ENCODE measurements at regions of chr18 and their contacts with region 1.

Region 1: GRCh38 chr18:38790303-38790702 is 1224.7 kb upstream of the CELF4 start:
- DNase-seq: peak; percentile 48
- H3K4me3 Mint-ChIP-seq: no peak overlapping the region
- H3K27ac Mint-ChIP-seq: no peak overlapping the region
- H3K4me1 Mint-ChIP-seq: no peaks in the 10 kb centered on the region
- H3K27me3 Mint-ChIP-seq: no peaks in the 10 kb centered on the region
- CTCF ChIP-seq: peak; percentile 46

Region 2: DNA sequence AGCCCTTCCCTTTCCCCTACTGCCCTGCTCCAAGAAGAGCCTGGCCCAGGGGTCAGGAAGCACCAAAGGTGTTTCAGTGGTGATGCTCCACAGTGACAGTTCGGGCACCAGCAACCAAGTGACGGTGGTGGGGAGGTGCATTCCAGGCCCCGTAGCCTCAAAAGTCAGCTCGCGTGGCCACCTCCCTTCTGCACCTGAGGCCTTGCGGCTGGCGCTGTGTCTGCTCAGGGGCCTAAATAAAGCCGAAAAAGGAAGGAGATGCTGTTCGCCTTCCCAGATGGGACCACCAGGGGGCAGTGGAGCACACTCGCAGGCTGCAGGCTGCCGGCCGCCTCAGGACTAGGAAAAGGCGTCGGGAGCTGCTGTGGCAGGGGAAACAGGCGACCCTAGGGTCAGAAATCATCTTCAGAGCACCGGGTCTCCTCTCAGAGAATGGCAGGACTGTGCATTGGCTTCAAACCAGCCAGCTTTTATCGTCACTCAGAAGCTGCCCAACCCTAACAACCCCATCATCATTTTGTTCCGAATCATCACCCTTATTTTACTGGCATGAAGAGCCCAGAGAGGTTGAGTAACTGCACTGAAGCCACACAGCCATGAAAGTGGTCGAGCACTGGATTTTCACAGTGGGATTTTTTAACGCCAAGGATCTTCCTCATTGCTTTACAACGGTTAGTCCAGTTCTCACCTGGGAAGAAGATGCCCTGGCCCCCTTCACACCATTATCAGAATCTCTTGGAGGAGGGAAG is 1011.7 kb before region 1 on chr18:
- CTCF ChIA-PET with region 1: no interaction called
- POLR2A ChIA-PET with region 1: no interaction called
- intact Hi-C with region 1: loop called (anchors 2 kb)
- DNase-seq: peak; percentile 59
- H3K4me3 Mint-ChIP-seq: no peak overlapping the region
- H3K27ac Mint-ChIP-seq: no peak overlapping the region
- H3K4me1 Mint-ChIP-seq: no peaks in the 10 kb centered on the region
- H3K27me3 Mint-ChIP-seq: peaks cover 21% of the 10 kb centered on the region
- CTCF ChIP-seq: peak; percentile 81

Region 3: GRCh38 chr18:38427232-38427631 is 363.1 kb before region 1 on chr18:
- CTCF ChIA-PET with region 1: no interaction called
- POLR2A ChIA-PET with region 1: no interaction called
- intact Hi-C with region 1: loop called (anchors 10 kb)
- DNase-seq: peak; percentile 18
- H3K4me3 Mint-ChIP-seq: no peak overlapping the region
- H3K27ac Mint-ChIP-seq: no peak overlapping the region
- H3K4me1 Mint-ChIP-seq: no peaks in the 10 kb centered on the region
- H3K27me3 Mint-ChIP-seq: no peaks in the 10 kb centered on the region
- CTCF ChIP-seq: no peak

Region 4: GRCh38 chr18:38459131-38459994 is 330.9 kb before region 1 on chr18:
- CTCF ChIA-PET with region 1: no interaction called
- POLR2A ChIA-PET with region 1: no interaction called
- intact Hi-C with region 1: no loop called
- DNase-seq: no peak
- H3K4me3 Mint-ChIP-seq: no peak overlapping the region
- H3K27ac Mint-ChIP-seq: no peak overlapping the region
- H3K4me1 Mint-ChIP-seq: no peaks in the 10 kb centered on the region
- H3K27me3 Mint-ChIP-seq: no peaks in the 10 kb centered on the region
- CTCF ChIP-seq: no peak

Region 5: GRCh38 chr18:38545071-38545470 is 245.2 kb before region 1 on chr18:
- CTCF ChIA-PET with region 1: no interaction called
- POLR2A ChIA-PET with region 1: no interaction called
- intact Hi-C with region 1: loop called (anchors 1 kb)
- DNase-seq: peak; percentile 81
- H3K4me3 Mint-ChIP-seq: no peak overlapping the region
- H3K27ac Mint-ChIP-seq: no peak overlapping the region
- H3K4me1 Mint-ChIP-seq: no peaks in the 10 kb centered on the region
- H3K27me3 Mint-ChIP-seq: no peaks in the 10 kb centered on the region
- CTCF ChIP-seq: peak; percentile 34

Measured in MCF 10A (cell line).